ENCODE measurements at regions of chr12 and their contacts with region 1.

Region 1: DNA sequence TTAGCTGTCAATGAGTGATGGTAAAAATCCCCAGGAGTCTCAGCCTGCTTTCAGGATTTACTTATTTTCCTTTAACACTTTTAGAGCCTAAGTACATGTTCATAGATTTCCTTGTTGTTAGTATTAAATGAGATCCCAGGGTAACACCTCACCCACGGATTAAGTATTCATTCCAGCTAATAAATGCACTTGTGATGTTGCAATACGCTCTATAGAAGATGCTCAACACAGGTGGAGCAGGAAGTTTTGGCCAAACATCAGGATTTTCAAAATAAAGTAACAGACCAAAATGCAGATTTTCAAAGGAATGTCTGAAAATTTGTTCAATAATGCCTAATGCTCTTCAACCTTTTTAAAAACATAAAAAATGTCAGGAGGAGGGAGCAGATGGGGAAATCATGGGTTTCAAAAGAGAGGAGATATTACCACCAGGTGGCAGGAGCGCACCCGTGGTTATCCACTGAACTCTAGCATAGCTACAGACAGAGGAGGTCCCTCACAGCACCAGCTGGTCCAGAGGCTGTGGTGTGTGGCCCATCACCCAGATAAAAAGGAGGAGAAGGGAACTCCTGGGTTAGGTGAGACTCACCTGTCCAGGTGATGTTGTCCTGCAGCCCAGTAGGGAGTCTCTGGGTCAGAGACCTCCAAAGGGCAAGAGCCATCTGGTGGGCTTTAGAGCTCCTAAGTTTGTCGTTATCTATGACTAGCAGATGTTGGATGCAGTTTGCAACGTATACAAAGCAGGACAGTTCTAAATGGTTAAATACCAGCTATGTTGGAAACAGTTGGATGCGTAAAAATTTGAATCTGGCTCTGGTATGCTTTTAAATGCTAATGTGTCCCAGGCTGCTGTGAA is 1158.4 kb upstream of the TMEM132C start:
- DNase-seq: peak; percentile 23 to 91 (median 70)

Region 2: GRCh38 chr12:127170226-127171180 is 61.9 kb after region 1 on chr12:
- intact Hi-C with region 1: no loop called
- DNase-seq: no peak

Region 3: GRCh38 chr12:127293507-127294310 is 185.1 kb after region 1 on chr12:
- intact Hi-C with region 1: loop called (anchors 1 kb)
- DNase-seq: peak; percentile 20 to 94 (median 64)

Region 4: GRCh38 chr12:127381048-127381668 is 272.6 kb after region 1 on chr12:
- intact Hi-C with region 1: loop called (anchors 1 kb)
- DNase-seq: peak; percentile 18 to 94 (median 64)